ENCODE measurements at regions of chr17 and their contacts with region 1.

Region 1: DNA sequence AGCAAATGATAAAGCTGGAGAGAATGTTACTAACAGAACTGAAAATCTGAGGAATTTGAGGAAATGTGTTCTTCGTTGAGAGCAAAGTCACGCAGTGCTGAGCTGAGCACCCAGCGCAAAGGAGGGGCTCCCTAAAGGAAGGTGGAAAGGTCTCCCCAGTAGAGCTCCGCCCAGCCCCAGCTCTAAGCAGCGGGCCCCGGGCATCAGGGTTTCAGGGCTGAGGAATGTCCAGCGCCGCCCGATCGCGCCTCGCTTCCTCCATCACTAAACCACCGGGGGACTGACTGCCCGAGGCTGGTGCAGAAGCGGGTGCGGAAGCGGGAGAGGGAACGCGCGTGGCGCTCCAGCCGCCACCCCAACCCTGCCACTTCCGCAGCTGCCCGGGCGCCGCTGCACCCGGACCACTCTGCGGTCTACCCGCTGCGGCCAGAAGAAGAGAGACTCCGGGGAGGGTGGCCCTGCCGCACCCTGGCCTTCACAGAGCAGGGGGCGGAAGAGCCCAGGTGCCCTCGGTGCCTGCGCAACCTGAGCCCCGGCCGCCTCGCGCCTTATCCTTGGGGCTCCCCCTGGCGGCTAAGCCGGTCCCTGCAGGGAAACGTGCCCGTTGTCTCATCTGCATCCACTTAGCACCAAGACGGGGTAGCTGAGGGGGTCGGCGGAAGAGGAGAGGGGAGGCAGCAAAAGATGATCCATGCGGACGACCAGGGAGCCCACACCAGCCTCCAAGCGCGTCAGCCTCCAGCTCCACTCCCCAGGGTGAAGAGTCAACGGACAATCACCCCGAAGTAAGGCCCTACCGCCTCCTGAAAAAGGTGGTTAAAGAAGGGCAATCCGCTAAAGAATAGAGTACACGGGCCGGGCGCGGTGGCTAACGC is 12.4 kb upstream of the GUCY2D start:
- DNase-seq: peak; percentile 85 to 99 (median 92)
- ATAC-seq: peak; percentile 96
- H3K4me3 ChIP-seq: peak overlapping the region; percentile 47 to 61
- H3K4me3 Mint-ChIP-seq: peak overlapping the region; percentile 77
- H3K27ac ChIP-seq: peak overlapping the region; percentile 51 to 61
- H3K27ac Mint-ChIP-seq: peak overlapping the region; percentile 86
- H3K4me1 ChIP-seq: peaks cover 13% of the 10 kb centered on the region
- H3K4me1 Mint-ChIP-seq: peaks cover 21% of the 10 kb centered on the region
- H3K27me3 ChIP-seq: no peaks in the 10 kb centered on the region
- H3K27me3 Mint-ChIP-seq: peaks cover under 1% of the 10 kb centered on the region
- CTCF ChIP-seq: peak; percentile 85

Region 2: GRCh38 chr17:7823581-7824397 is 166.2 kb before region 1 on chr17:
- CTCF ChIA-PET with region 1: interaction called, 33 read pairs
- POLR2A ChIA-PET with region 1: no interaction called
- intact Hi-C with region 1: loop called (anchors 1 kb)
- DNase-seq: no peak
- ATAC-seq: no peak
- H3K4me3 ChIP-seq: no peak overlapping the region
- H3K4me3 Mint-ChIP-seq: no peak overlapping the region
- H3K27ac ChIP-seq: no peak overlapping the region
- H3K27ac Mint-ChIP-seq: no peak overlapping the region
- H3K4me1 ChIP-seq: no peaks in the 10 kb centered on the region
- H3K4me1 Mint-ChIP-seq: no peaks in the 10 kb centered on the region
- H3K27me3 ChIP-seq: no peaks in the 10 kb centered on the region
- H3K27me3 Mint-ChIP-seq: no peaks in the 10 kb centered on the region
- CTCF ChIP-seq: no peak

Region 3: GRCh38 chr17:7844292-7845154 is 145.5 kb before region 1 on chr17:
- CTCF ChIA-PET with region 1: interaction called, 12 read pairs
- POLR2A ChIA-PET with region 1: no interaction called
- intact Hi-C with region 1: no loop called
- DNase-seq: peak; percentile 67 to 94 (median 79)
- ATAC-seq: peak; percentile 8
- H3K4me3 ChIP-seq: peak overlapping the region; percentile 94 to 98
- H3K4me3 Mint-ChIP-seq: peak overlapping the region; percentile 91
- H3K27ac ChIP-seq: peak overlapping the region; percentile 98 to 100
- H3K27ac Mint-ChIP-seq: peak overlapping the region; percentile 99
- H3K4me1 ChIP-seq: peaks cover 39% of the 10 kb centered on the region
- H3K4me1 Mint-ChIP-seq: peaks cover 33% of the 10 kb centered on the region
- H3K27me3 ChIP-seq: no peaks in the 10 kb centered on the region
- H3K27me3 Mint-ChIP-seq: no peaks in the 10 kb centered on the region
- CTCF ChIP-seq: no peak

Region 4: DNA sequence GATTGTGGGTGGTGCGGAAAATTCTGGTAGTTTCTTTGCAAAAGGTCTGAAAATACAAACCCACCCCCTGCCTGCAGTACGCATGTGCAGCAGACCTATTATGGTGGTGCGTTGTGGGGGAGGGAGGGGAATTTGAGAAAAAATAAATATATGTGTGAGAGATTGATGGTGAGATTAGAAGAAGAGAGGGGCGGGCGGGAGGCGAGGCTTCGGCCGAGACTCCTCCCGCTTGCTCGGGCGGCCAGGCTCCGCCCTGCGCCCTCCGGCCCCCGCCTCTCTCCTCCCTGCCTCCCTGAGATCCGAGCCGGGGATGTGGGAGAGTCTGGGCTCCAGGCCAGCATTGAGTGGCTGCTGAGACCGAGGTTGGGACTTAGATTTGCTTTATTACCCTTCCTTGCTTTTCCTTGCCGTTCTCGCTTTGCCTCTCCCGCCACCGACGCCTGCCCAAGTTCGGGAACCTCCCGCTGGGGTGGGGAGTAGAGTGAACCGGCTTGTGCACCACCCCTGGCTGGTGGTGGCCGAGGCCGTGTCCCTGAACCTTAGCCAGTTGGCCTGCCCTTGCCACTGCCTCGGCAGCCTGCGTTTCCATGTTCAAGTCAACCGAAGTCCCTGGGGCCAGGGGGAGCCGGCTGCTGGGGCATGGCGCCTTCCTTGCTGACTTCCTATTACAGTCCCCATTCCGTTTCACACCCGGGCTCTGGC is 102.4 kb before region 1 on chr17:
- CTCF ChIA-PET with region 1: interaction called, 5 read pairs
- POLR2A ChIA-PET with region 1: no interaction called
- intact Hi-C with region 1: loop called in 1 of 2 experiments (anchors 1 kb)
- DNase-seq: peak; percentile 73 to 97 (median 87)
- ATAC-seq: peak; percentile 71
- H3K4me3 ChIP-seq: peak overlapping the region; percentile 86 to 89
- H3K4me3 Mint-ChIP-seq: no peak overlapping the region
- H3K27ac ChIP-seq: peak overlapping the region; percentile 61 to 80
- H3K27ac Mint-ChIP-seq: no peak overlapping the region
- H3K4me1 ChIP-seq: peaks cover 30% of the 10 kb centered on the region
- H3K4me1 Mint-ChIP-seq: peaks cover 13% of the 10 kb centered on the region
- H3K27me3 ChIP-seq: no peaks in the 10 kb centered on the region
- H3K27me3 Mint-ChIP-seq: no peaks in the 10 kb centered on the region
- CTCF ChIP-seq: no peak

Region 5: DNA sequence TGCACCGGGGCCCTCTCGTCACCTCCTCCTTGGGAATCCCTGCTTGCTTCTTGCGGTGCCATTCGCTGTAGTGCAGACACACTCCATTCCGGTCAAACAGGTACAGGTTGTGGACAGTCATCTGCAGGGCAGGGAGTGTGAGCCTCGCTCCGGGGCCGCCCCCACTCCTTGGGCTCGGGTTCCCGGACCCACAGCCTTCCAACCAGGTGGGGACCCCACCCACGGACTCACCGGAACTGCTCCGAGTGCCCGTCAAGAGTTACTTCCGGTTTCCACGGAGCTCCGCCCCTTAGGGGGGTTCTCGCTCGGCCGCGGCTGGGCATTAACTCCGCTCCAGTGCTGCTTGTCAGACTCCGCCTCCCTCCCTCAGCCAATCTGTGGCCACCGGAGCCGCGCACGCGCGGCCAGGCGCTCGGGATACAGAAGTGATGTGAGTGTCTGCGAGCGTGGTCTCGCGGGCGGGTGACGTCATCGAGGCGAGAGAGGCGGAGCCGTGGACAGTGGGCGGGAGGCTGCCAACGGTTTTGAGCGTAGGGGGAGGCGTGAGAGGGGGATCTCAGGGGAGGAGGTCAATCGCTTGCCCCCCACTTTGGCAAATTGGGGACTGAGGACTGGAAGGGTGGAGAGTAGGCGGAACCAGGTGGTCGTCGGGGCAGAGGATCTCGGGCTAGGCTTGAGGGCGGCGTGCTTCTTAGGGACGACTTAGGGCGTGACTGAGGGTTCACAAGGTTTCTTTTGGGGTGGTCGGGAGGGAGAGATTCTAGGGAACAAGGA is 58.1 kb before region 1 on chr17 and contains the starts of genes CNTROB and TRAPPC1:
- CTCF ChIA-PET with region 1: interaction called, 53 read pairs
- POLR2A ChIA-PET with region 1: interaction called, 3 read pairs
- intact Hi-C with region 1: loop called in 1 of 2 experiments (anchors 1 kb)
- DNase-seq: peak; percentile 99 to 100 (median 99)
- ATAC-seq: peak; percentile 93
- H3K4me3 ChIP-seq: peak within 1 kb of the TSS; percentile 96
- H3K4me3 Mint-ChIP-seq: peak within 1 kb of the TSS; percentile 100
- H3K27ac ChIP-seq: peak within 1 kb of the TSS; percentile 85
- H3K27ac Mint-ChIP-seq: peak within 1 kb of the TSS; percentile 99
- H3K4me1 ChIP-seq: peaks cover 22% of the 10 kb centered on the region
- H3K4me1 Mint-ChIP-seq: peaks cover 50% of the 10 kb centered on the region
- H3K27me3 ChIP-seq: no peaks in the 10 kb centered on the region
- H3K27me3 Mint-ChIP-seq: no peaks in the 10 kb centered on the region
- CTCF ChIP-seq: no peak
- total RNA-seq, gene CNTROB: 20.1 to 23.6 TPM
- total RNA-seq, gene TRAPPC1: 29.6 to 39.4 TPM